H1 (cell line): ENCODE measurements at regions of chr14 and their contacts with region 1.

Region 1: GRCh38 chr14:36320200-36320896 is at the start of gene MBIP:
- DNase-seq: peak; percentile 83 to 85
- H3K4me3 ChIP-seq: peak within 1 kb of the TSS; percentile 95 to 99 (median 98)
- H3K27ac ChIP-seq: peak within 1 kb of the TSS; percentile 76
- H3K4me1 ChIP-seq: peaks cover 0 to 3% (median 1%) of the 10 kb centered on the region in 4 experiments; a peak in 4 of 7 replicates
- H3K27me3 ChIP-seq: no peaks in the 10 kb centered on the region; a peak in 1 of 7 replicates
- CTCF ChIP-seq: no peak; a peak in 1 of 4 replicates
- EP300 ChIP-seq: no peak
- POLR2A ChIP-seq: peak; percentile 33 to 85
- RAD21 ChIP-seq: no peak
- total RNA-seq, gene MBIP: 24.4 and 27.4 TPM in 2 replicates

Region 2: GRCh38 chr14:36281309-36281708 is 39.0 kb before region 1 on chr14:
- CTCF ChIA-PET with region 1: no interaction called
- POLR2A ChIA-PET with region 1: no interaction called
- DNase-seq: no peak
- H3K4me3 ChIP-seq: no peak overlapping the region
- H3K27ac ChIP-seq: no peak overlapping the region
- H3K4me1 ChIP-seq: peaks cover 0 to 10% (median 9%) of the 10 kb centered on the region in 4 experiments; a peak in 4 of 7 replicates
- H3K27me3 ChIP-seq: no peaks in the 10 kb centered on the region; a peak in 1 of 7 replicates
- CTCF ChIP-seq: no peak
- EP300 ChIP-seq: no peak
- POLR2A ChIP-seq: no peak
- RAD21 ChIP-seq: no peak

Region 3: DNA sequence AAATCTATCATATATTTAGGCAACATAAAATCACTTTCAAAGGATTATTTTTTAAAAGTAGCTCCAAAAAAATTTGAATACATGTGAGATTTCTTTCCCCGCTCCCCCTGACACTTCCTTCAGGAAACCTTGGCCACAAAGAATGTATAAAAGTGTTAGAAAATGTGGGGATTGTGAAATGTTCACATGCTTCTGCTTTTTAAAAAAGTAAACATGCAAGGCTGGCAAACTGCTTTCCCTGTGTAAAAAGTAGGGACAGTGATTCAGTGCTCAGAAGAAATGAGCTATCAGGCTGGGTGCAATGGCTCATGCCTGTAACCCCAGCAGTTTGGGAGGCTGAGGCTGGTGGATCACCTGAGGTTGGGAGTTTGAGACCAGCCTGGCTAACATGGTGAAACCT is 26.5 kb before region 1 on chr14:
- CTCF ChIA-PET with region 1: interaction called, 4 read pairs
- POLR2A ChIA-PET with region 1: interaction called, 13 read pairs
- DNase-seq: no peak
- H3K4me3 ChIP-seq: no peak overlapping the region
- H3K27ac ChIP-seq: no peak overlapping the region
- H3K4me1 ChIP-seq: peaks cover 0 to 3% (median 1%) of the 10 kb centered on the region in 4 experiments; a peak in 3 of 7 replicates
- H3K27me3 ChIP-seq: no peaks in the 10 kb centered on the region
- CTCF ChIP-seq: no peak
- EP300 ChIP-seq: no peak
- POLR2A ChIP-seq: no peak
- RAD21 ChIP-seq: no peak

Region 4: GRCh38 chr14:36339816-36340215 is 19.5 kb after region 1 on chr14:
- CTCF ChIA-PET with region 1: no interaction called
- POLR2A ChIA-PET with region 1: no interaction called
- DNase-seq: no peak
- H3K4me3 ChIP-seq: no peak overlapping the region
- H3K27ac ChIP-seq: no peak overlapping the region
- H3K4me1 ChIP-seq: no peaks in the 10 kb centered on the region
- H3K27me3 ChIP-seq: peaks cover 0 to 1% (median 0%) of the 10 kb centered on the region in 4 experiments; a peak in 1 of 7 replicates
- CTCF ChIP-seq: no peak
- EP300 ChIP-seq: no peak
- POLR2A ChIP-seq: no peak
- RAD21 ChIP-seq: no peak

Region 5: DNA sequence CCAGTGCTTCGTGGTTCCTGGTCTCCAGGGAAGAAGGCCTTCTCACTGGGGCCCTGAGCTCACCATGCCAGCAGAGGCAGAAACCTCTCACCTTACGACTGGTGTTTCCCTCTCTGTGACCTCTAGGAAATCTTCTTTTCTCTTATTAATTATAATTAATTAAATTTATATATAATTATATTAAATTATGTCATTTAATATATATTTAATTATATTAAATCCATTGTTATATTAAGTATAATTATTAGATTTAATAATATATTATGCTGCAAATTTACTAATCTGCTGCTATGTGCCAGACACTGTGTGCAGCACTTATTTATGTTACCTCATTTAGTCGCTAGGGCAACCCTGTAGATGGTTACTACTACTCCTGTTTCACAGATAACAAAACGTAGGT is 70.4 kb after region 1 on chr14:
- CTCF ChIA-PET with region 1: no interaction called
- POLR2A ChIA-PET with region 1: no interaction called
- DNase-seq: no peak
- H3K4me3 ChIP-seq: no peak overlapping the region
- H3K27ac ChIP-seq: no peak overlapping the region
- H3K4me1 ChIP-seq: no peaks in the 10 kb centered on the region
- H3K27me3 ChIP-seq: no peaks in the 10 kb centered on the region
- CTCF ChIP-seq: no peak
- EP300 ChIP-seq: no peak
- POLR2A ChIP-seq: no peak
- RAD21 ChIP-seq: no peak